OCI-LY7 (cell line): ENCODE measurements at regions of chr2 and their contacts with region 1.

Region 1: GRCh38 chr2:219171231-219171651 is 1.4 kb upstream of the SLC23A3 start:
- DNase-seq: peak; percentile 63
- H3K4me3 ChIP-seq: no peak overlapping the region
- H3K27ac ChIP-seq: no peak overlapping the region
- H3K4me1 ChIP-seq: peaks cover 7% of the 10 kb centered on the region
- CTCF ChIP-seq: peak; percentile 93

Region 2: GRCh38 chr2:218995972-218996711 is 175.1 kb before region 1 on chr2:
- CTCF ChIA-PET with region 1: interaction called, 13 read pairs
- POLR2A ChIA-PET with region 1: no interaction called
- intact Hi-C with region 1: no loop called
- DNase-seq: peak; percentile 54
- H3K4me3 ChIP-seq: no peak overlapping the region
- H3K27ac ChIP-seq: no peak overlapping the region
- H3K4me1 ChIP-seq: no peaks in the 10 kb centered on the region
- CTCF ChIP-seq: peak; percentile 85

Region 3: DNA sequence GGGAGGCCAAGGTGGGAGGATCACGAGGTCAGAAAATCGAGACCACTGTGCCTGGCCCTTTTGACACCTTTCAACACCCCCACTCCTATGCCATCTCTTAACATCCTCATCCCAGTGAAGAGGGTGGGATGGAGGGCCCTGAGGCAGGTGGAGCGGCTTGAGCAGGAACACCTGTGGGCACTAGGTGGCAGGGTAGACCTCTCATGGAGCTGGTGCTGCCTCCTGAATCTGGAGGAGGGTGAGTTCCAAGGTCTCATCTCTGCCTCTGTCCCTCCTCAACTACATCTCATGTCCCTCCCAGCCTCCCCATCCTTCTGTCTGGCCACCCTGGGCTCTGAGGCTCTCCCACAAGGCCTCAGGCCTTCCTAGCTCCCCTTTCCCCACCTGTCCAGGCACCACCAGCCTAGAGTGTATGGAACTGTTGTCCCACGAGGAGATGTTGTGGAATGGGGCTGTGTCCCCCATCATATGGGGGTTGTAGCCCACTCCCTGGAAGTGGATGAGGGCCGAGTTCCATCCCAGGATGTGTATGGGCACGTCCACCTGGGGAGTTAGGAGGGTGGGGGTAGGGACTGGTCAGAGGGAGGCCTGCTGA is 161.0 kb before region 1 on chr2:
- CTCF ChIA-PET with region 1: no interaction called
- POLR2A ChIA-PET with region 1: no interaction called
- intact Hi-C with region 1: no loop called
- DNase-seq: peak; percentile 44
- H3K4me3 ChIP-seq: no peak overlapping the region
- H3K27ac ChIP-seq: no peak overlapping the region
- H3K4me1 ChIP-seq: no peaks in the 10 kb centered on the region
- CTCF ChIP-seq: peak; percentile 73